Aorta (tissue), 5 donors: ENCODE measurements at regions of chr2 and their contacts with region 1.

Region 1: DNA sequence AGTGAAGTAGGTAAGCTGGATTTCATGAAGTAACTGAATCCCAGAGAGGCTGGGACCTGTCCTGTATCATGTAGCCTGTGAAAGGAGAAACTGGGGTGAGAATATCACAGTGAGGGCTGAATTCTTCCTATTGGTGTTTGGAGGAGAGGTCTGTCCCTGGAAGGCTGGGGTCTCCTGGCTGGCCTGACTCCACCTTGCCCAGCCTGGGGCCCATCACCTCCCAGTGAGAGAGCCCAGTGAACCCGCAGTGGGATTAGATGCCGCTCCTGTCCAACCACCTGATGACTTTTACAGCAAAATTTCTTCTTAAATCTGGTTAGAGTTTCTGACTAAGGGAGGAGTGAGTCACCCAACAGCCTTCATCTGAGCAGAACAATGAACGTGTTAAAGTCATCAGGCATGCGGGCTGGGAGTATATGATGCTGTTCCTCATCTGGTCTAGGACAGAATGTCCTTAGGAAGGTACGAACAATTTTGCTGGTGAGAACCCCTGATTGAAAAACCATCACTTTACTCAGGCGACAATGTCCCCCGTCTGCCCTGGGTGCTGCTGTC is 152.9 kb downstream of the LPIN1 start:
- DNase-seq: no peak
- ATAC-seq: no peak
- H3K4me3 ChIP-seq: no peak overlapping the region
- H3K27ac ChIP-seq: no peak overlapping the region
- H3K4me1 ChIP-seq: no peaks in the 10 kb centered on the region
- H3K27me3 ChIP-seq: no peaks in the 10 kb centered on the region

Region 2: DNA sequence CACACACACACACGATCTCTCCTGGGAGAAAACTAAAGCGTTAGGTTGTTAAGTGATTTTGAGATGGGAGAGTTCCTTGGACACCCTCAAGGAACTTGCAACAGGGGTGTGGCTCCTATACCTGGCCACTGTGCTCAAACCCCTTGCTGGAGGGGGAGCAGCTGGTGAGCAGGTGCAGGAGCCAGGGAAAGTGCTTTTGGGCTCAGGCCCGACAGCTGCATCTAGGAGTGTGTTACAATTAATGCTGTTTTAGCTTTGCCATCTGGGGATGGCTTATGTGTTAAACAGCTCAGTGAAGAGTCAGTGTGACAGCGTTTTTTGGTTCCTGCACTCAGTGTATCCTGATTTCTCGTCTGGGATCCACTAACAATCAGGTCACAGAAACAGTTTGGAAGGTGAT is 1328.2 kb after region 1 on chr2:
- intact Hi-C with region 1: loop called in 1 of 2 experiments (anchors 10 kb)
- DNase-seq: no peak
- ATAC-seq: no peak
- H3K4me3 ChIP-seq: no peak overlapping the region
- H3K27ac ChIP-seq: no peak overlapping the region
- H3K4me1 ChIP-seq: no peaks in the 10 kb centered on the region
- H3K27me3 ChIP-seq: no peaks in the 10 kb centered on the region